Posterior vena cava (tissue), 2 donors: ENCODE measurements at regions of chr10 and their contacts with region 1.

Region 1: DNA sequence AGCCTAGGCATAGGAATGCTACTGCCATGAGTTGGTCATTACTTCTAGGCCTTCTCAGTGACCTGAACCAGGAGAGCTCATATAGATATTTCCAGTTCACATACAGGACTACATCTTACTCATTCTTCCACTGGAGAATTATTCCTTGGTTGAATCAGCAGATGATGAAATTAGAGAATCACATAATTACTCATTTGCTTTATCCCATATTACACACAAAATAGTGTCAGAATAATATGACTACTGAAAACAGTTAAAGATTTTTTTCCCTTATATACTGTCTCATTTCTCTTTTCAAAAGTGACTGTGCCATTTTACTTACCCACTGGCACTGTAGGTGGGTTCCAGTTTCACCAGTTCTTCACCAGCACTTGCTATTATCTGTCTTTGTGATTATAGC is 18.5 kb downstream of the BMS1 start:
- DNase-seq: no peak

Region 2: DNA sequence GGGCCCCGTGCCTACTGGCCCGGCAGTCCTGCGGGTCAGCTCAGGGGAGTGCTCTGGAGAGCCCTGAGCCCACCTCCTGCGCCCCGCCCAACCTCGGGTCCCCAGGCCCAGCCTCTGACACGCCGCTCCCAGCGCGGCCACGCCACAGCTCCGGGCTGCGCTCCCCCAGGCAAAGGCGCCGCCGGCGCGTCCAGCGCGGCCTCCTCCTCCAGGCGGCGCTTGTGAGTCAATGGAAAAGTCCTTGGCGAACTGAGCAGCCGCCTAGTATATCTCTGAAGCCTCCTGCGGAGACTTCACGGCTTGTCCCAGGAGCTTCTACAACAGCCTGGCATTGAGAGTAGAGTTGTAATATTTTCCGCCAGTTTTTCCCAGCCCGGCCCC is 48.0 kb before region 1 on chr10:
- intact Hi-C with region 1: no loop called
- DNase-seq: peak; percentile 91

Region 3: GRCh38 chr10:42776681-42777080 is 24.5 kb before region 1 on chr10:
- intact Hi-C with region 1: no loop called
- DNase-seq: no peak

Region 4: GRCh38 chr10:43313901-43314300 is 512.8 kb after region 1 on chr10:
- intact Hi-C with region 1: loop called in 1 of 2 experiments (anchors 2 kb)
- DNase-seq: no peak